ENCODE measurements at regions of chr1 and their contacts with region 1.

Region 1: DNA sequence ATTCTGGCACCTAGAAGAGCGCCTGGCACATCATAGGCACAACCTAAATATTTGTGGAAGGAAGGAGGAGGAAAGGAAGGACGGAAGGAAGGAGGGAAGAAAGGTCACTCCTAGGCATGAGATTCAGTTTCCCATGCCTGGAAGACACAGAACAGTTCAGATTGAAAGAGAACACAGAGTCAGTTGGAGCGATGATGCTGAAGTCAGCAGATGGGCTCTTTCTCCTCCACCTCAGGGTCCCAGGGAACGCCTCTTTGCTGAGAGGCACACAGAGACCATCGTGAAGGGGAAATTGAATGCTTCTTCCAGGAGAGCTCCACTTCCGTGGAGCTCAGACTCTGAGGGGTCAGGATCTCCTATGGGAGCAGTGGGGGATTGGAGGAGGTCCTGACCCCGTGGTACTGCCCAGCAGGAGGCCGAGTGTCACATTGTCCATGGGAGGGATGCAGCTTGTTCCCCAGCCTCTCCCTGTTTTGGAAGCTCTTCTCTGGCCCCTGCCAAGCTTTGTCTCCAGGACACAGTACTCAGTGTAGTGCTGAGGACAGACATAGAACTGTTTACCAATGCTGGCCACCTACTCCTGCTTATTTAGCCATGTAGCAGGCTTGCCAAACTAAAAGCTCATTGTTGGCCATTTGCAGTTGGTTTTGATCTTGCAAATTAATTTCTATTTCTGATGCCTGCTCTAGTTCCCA is 2.4 kb downstream of the MYBPHL start:
- DNase-seq: peak; percentile 69 to 97 (median 82)

Region 2: DNA sequence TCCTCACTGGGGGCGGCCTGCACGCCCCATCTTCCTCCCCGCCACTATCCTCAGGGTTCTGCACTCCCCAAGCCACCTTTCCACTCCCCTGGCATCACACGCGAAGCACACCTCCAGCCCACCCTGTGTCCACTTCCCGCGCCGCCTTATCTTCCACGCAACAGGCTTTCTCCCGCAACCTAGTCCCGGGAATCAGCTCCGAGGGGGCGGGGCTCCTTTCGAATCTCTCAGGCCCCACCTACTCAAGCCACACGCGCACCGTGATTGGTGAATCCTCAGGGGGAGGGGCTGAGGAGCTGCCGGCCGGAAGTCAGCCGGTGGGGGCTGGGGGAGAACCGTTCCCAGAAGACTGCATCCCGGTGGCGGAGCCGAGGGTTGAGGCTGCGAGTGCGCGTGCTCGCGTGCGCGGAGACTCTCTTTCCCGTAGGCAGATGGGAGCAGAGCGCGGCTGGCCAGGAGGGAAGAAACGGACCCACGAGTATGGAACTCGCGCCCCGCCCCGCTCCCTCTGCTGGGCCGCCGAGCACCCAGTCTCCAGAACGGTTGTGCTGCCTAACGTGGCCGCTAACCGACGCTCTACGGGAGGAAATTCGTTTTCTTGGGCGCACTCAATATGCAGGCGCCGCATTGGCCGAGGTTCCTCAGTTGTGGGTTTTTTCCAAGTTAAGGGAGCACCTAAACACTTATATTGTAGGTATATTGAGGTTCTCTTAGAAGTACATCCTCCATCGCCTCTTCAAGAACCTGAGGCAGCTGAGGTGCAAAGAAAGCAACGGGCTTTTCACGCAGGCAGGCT is 21.2 kb before region 1 on chr1 and contains the start of gene PSRC1:
- intact Hi-C with region 1: loop called (anchors 2 kb)
- DNase-seq: peak; percentile 97 to 100 (median 99)